Left colon (tissue), 2 donors: ENCODE measurements at regions of chr6 and their contacts with region 1.

Region 1: DNA sequence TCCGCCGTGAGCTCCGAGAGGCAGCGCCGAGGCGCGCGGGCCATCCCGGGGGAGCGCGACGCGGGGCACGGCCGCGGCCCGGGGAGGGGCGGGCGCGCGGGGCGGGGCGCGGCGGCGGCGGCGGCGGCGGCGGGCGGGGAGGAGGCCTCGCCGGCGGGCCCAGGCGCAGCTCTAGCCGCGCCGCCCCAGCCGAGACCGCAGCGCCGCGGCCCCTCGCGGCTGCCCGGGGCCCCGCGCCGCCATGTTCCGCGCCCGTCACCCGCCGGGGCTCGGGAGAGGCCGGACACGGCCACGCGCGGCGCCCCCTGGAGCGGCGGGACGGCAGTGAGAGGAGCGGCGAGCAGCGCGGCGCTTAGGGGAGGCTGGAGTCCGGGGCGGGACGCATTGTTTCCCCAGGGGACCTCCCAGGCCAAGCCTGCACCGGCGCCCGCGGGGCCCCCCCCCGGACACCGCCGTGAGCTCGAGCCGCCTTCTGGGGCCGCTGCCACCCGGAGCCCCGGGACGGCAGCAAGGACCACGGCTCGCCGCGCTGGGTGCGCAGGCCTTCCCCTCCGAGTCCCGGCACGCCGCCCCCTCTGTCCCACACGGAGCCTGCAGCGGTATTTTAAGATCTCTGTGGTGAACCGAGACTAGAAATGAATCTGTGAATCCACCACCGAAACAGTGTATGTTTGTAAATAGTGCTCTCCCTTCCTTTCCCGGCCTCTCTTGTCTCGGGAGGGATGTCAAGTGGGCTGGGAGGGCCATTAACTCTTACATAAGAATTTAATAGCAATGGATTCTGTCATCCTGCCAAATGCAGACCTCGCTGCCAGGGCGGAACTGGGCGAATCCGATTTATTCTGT is at the start of gene KIF13A:
- DNase-seq: peak; percentile 68 to 72
- ATAC-seq: peak; percentile 66
- total RNA-seq, gene KIF13A: 40.5 to 47.0 TPM

Region 2: DNA sequence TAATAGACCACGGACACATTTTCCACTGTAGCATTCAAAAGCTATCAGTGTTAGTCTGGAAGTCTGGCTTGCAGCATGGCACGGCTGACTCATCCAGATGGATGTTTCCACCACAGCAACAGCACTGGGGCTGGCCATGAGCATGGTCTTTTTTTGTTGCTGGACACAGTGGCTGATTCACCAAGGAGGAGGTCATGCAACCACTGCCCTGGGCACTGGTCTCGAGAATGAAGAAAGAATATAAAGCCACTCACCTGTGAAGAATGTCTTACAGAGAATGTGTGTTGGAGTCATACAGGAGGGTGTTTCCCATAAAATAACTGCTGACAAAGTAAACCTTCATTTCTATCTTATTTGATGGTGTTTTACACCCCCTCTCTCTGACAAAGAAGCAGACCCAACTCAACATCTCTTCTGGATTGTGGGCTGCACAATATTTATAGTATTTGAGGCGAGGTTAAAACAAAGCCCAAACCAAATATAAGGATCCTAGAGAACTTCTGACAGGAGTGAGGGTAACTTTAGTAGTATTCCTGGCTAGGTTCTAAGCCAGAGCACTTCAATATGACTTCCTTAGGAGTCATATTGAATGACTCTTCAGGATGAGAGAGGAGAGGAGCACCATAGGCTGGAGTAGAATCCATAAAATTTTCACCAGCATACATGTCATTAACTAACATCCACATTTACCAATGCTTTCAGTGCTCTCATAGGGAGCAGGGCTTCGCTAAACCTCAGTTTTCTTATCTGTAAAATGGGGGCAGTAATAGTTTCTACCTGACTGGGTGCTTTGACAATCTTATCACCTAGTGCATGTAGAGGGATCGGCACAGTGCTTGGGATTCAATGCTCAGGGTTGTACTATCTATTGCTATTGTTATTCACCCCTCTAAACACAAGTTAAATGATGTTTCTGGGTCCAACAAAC is 121.7 kb before region 1 on chr6:
- intact Hi-C with region 1: loop called in 1 of 2 experiments (anchors 10 kb)
- DNase-seq: peak; percentile 14 to 49
- ATAC-seq: peak; percentile 1